ENCODE measurements at regions of chr11 and their contacts with region 1.

Region 1: GRCh38 chr11:11157185-11157584 is 195.9 kb downstream of the CSNK2A3 start:
- DNase-seq: peak; percentile 37 to 78 (median 70)
- ATAC-seq: peak; percentile 74
- H3K4me3 ChIP-seq: no peak overlapping the region
- H3K4me3 Mint-ChIP-seq: no peak overlapping the region
- H3K27ac ChIP-seq: no peak overlapping the region
- H3K27ac Mint-ChIP-seq: peak overlapping the region; percentile 94
- H3K4me1 ChIP-seq: peaks cover 23% of the 10 kb centered on the region
- H3K4me1 Mint-ChIP-seq: peaks cover 22% of the 10 kb centered on the region
- H3K27me3 ChIP-seq: no peaks in the 10 kb centered on the region
- H3K27me3 Mint-ChIP-seq: no peaks in the 10 kb centered on the region
- CTCF ChIP-seq: peak; percentile 61

Region 2: DNA sequence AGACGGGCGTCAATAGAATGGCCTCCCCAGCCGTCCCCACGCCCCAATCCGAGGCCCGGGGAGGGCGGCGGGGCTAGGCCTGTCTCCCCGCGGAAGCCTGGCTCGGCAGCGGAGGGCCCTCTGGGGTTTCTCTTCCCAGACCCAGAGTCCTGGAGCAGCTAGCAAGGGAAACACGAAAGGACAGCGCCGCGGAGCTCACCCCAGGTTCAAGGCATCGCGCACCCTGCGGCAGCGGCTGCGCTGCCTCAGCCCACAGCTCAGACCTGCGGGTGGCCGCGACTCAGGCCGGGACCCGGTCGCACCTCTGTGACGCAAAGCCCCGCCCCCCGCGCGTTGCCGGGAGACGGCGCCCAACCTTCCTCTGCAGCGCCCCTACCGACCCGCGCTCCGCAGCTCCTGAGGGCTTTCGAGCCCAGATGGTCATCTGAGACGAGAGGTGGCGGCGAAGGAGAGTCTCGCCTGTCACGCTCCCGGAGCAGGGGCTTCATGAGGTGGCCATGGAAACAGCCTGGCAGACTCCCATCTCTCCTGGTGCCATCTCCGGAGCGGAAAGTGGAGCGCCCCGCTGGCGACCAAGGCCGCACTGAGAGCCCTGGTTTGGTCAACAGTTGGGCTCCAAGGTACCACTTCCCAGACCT is 616.1 kb before region 1 on chr11 and contains the start of gene RNF141:
- CTCF ChIA-PET with region 1: no interaction called
- POLR2A ChIA-PET with region 1: no interaction called
- intact Hi-C with region 1: no loop called
- DNase-seq: peak; percentile 89 to 98 (median 95)
- ATAC-seq: peak; percentile 98
- H3K4me3 ChIP-seq: peak within 1 kb of the TSS; percentile 78 to 83
- H3K4me3 Mint-ChIP-seq: peak within 1 kb of the TSS; percentile 91
- H3K27ac ChIP-seq: peak within 1 kb of the TSS; percentile 77 to 85
- H3K27ac Mint-ChIP-seq: peak within 1 kb of the TSS; percentile 89
- H3K4me1 ChIP-seq: peaks cover 13% of the 10 kb centered on the region
- H3K4me1 Mint-ChIP-seq: peaks cover 32% of the 10 kb centered on the region
- H3K27me3 ChIP-seq: no peaks in the 10 kb centered on the region
- H3K27me3 Mint-ChIP-seq: no peaks in the 10 kb centered on the region
- CTCF ChIP-seq: peak; percentile 85
- total RNA-seq, gene RNF141: 17.3 to 19.2 TPM

Region 3: DNA sequence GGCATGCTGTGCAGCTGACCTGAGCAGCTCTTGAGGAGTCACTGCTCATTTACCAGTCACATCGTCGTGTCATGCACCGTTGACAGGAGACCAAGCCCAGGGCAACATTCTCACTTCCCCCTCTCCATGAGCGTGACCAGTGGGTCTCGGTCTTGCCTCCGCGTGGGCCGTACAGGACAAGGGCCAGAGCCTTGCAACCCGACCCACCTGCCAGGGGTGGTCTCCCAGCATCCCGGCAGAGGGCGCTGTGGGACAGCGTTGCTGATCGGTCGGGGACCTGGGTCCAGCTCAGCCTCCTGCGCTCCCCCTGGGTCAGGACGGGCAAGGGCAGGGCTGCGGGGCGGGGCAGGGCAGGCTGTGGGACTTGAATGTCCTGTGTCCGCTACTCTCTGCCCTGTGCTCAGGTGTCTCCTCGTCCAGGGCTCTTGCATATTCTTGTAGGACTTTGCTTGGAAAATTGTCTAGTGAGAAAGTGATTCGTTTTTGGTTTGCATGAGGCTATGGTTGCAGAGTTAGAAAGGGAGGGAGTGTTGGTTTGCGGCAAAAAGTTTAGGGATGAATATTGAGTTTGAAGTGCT is 364.7 kb before region 1 on chr11:
- CTCF ChIA-PET with region 1: no interaction called
- POLR2A ChIA-PET with region 1: no interaction called
- intact Hi-C with region 1: loop called (anchors 2 to 5 kb)
- DNase-seq: peak; percentile 65 to 91 (median 85)
- ATAC-seq: peak; percentile 88
- H3K4me3 ChIP-seq: no peak overlapping the region
- H3K4me3 Mint-ChIP-seq: no peak overlapping the region
- H3K27ac ChIP-seq: no peak overlapping the region
- H3K27ac Mint-ChIP-seq: no peak overlapping the region
- H3K4me1 ChIP-seq: peaks cover 24% of the 10 kb centered on the region
- H3K4me1 Mint-ChIP-seq: peaks cover 31% of the 10 kb centered on the region
- H3K27me3 ChIP-seq: peaks cover 0 to 5% of the 10 kb centered on the region in 2 experiments
- H3K27me3 Mint-ChIP-seq: peaks cover 3% of the 10 kb centered on the region
- CTCF ChIP-seq: peak; percentile 90

Region 4: GRCh38 chr11:11022125-11022730 is 135.0 kb before region 1 on chr11:
- CTCF ChIA-PET with region 1: interaction called, 166 read pairs
- POLR2A ChIA-PET with region 1: no interaction called
- intact Hi-C with region 1: no loop called
- DNase-seq: peak in 3 of 9 experiments; percentile 27 to 54 (median 48)
- ATAC-seq: no peak
- H3K4me3 ChIP-seq: no peak overlapping the region
- H3K4me3 Mint-ChIP-seq: no peak overlapping the region
- H3K27ac ChIP-seq: no peak overlapping the region
- H3K27ac Mint-ChIP-seq: no peak overlapping the region
- H3K4me1 ChIP-seq: no peaks in the 10 kb centered on the region
- H3K4me1 Mint-ChIP-seq: no peaks in the 10 kb centered on the region
- H3K27me3 ChIP-seq: no peaks in the 10 kb centered on the region
- H3K27me3 Mint-ChIP-seq: peaks cover 4% of the 10 kb centered on the region
- CTCF ChIP-seq: peak; percentile 63

Region 5: GRCh38 chr11:11117730-11118129 is 39.5 kb before region 1 on chr11:
- CTCF ChIA-PET with region 1: interaction called, 5 read pairs
- POLR2A ChIA-PET with region 1: no interaction called
- intact Hi-C with region 1: loop called in 1 of 2 experiments (anchors 5 kb)
- DNase-seq: no peak
- ATAC-seq: no peak
- H3K4me3 ChIP-seq: no peak overlapping the region
- H3K4me3 Mint-ChIP-seq: no peak overlapping the region
- H3K27ac ChIP-seq: no peak overlapping the region
- H3K27ac Mint-ChIP-seq: no peak overlapping the region
- H3K4me1 ChIP-seq: no peaks in the 10 kb centered on the region
- H3K4me1 Mint-ChIP-seq: peaks cover 1% of the 10 kb centered on the region
- H3K27me3 ChIP-seq: no peaks in the 10 kb centered on the region
- H3K27me3 Mint-ChIP-seq: no peaks in the 10 kb centered on the region
- CTCF ChIP-seq: no peak

Region 6: DNA sequence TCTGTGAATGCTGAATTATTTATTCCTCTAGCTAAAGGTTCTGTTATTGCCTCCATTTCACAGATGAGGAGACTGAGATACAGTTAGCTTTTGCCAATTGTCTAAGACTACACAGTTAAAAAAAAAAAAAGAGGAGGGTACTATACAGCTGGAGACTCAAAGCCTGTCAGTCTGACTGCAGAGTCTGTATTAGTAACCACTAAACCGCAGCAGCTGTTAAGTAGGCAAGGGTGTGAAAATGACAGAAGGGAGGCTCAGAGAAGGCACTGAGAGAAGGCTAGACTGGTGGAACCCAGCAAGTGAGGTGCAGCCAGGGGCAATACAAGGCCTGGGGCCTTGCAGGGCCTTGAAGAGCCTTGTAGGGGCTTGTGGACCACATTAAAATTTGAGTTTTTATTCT is 14.7 kb after region 1 on chr11:
- CTCF ChIA-PET with region 1: interaction called, 13 read pairs
- POLR2A ChIA-PET with region 1: no interaction called
- intact Hi-C with region 1: no loop called
- DNase-seq: peak in 7 of 9 experiments; percentile 17 to 84 (median 56)
- ATAC-seq: peak; percentile 93
- H3K4me3 ChIP-seq: no peak overlapping the region
- H3K4me3 Mint-ChIP-seq: no peak overlapping the region
- H3K27ac ChIP-seq: no peak overlapping the region
- H3K27ac Mint-ChIP-seq: peak overlapping the region; percentile 42
- H3K4me1 ChIP-seq: peaks cover 6% of the 10 kb centered on the region
- H3K4me1 Mint-ChIP-seq: peaks cover 12% of the 10 kb centered on the region
- H3K27me3 ChIP-seq: peaks cover 0 to 3% of the 10 kb centered on the region in 2 experiments
- H3K27me3 Mint-ChIP-seq: no peaks in the 10 kb centered on the region
- CTCF ChIP-seq: no peak

Measured in CD8-positive, alpha-beta T cell (primary cell).